A673 (cell line): ENCODE measurements at regions of chr6 and their contacts with region 1.

Region 1: GRCh38 chr6:15370733-15371671 is 125.1 kb downstream of the JARID2 start:
- DNase-seq: no peak
- H3K4me3 ChIP-seq: no peak overlapping the region
- H3K27ac ChIP-seq: no peak overlapping the region
- H3K4me1 ChIP-seq: peaks cover 50% of the 10 kb centered on the region
- H3K27me3 ChIP-seq: no peaks in the 10 kb centered on the region
- CTCF ChIP-seq: no peak

Region 2: GRCh38 chr6:15322184-15322583 is 48.8 kb before region 1 on chr6:
- CTCF ChIA-PET with region 1: no interaction called
- POLR2A ChIA-PET with region 1: interaction called, 10 read pairs
- intact Hi-C with region 1: no loop called
- DNase-seq: no peak
- H3K4me3 ChIP-seq: no peak overlapping the region
- H3K27ac ChIP-seq: no peak overlapping the region
- H3K4me1 ChIP-seq: peaks cover 64% of the 10 kb centered on the region
- H3K27me3 ChIP-seq: no peaks in the 10 kb centered on the region
- CTCF ChIP-seq: no peak